ENCODE measurements at regions of chr11 and their contacts with region 1.

Region 1: GRCh38 chr11:33257897-33258630 is 883 bp downstream of the HIPK3 start:
- DNase-seq: peak; percentile 91 to 92
- ATAC-seq: peak; percentile 85 to 96 (median 88)
- H3K4me3 ChIP-seq: peak overlapping the region; percentile 57 to 97 (median 93)
- H3K27ac ChIP-seq: peak overlapping the region; percentile 95 to 100 (median 100)
- H3K4me1 ChIP-seq: peaks cover 0 to 50% (median 42%) of the 10 kb centered on the region in 9 donors
- H3K27me3 ChIP-seq: no peaks in the 10 kb centered on the region
- CTCF ChIP-seq: peak in 7 of 9 donors; percentile 16 to 56 (median 44)

Region 2: DNA sequence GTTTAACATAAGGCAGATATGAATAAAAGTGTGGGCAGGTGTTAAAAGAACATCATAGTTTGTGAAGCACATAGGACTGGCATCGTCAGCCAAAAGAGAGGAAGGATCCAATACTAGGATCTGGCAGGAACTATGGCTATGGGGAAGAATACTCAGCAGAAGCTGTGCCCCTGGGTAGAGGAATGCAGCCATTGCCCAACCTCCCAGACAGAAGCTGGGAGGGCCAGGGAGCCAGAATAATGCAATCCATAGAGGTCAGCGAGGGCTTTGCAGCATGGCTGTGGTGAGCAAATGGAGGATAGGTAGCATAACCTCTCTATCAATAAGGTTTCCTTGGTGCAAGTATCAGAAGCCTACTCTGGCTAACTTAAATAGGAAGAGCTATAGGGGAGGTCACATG is 85.1 kb before region 1 on chr11:
- intact Hi-C with region 1: loop called in 7 of 10 experiments (anchors 2 to 10 kb)
- DNase-seq: no peak
- ATAC-seq: peak in 3 of 8 donors; percentile 40 to 89 (median 47)
- H3K4me3 ChIP-seq: no peak overlapping the region
- H3K27ac ChIP-seq: no peak overlapping the region
- H3K4me1 ChIP-seq: peaks cover 0 to 9% (median 3%) of the 10 kb centered on the region in 9 donors
- H3K27me3 ChIP-seq: no peaks in the 10 kb centered on the region
- CTCF ChIP-seq: no peak

Region 3: GRCh38 chr11:33307984-33308383 is 49.9 kb after region 1 on chr11:
- intact Hi-C with region 1: loop called in 1 of 10 experiments (anchors 5 kb)
- DNase-seq: no peak
- ATAC-seq: no peak
- H3K4me3 ChIP-seq: no peak overlapping the region
- H3K27ac ChIP-seq: no peak overlapping the region
- H3K4me1 ChIP-seq: peaks cover 2 to 90% (median 55%) of the 10 kb centered on the region in 9 donors
- H3K27me3 ChIP-seq: no peaks in the 10 kb centered on the region
- CTCF ChIP-seq: no peak

Region 4: DNA sequence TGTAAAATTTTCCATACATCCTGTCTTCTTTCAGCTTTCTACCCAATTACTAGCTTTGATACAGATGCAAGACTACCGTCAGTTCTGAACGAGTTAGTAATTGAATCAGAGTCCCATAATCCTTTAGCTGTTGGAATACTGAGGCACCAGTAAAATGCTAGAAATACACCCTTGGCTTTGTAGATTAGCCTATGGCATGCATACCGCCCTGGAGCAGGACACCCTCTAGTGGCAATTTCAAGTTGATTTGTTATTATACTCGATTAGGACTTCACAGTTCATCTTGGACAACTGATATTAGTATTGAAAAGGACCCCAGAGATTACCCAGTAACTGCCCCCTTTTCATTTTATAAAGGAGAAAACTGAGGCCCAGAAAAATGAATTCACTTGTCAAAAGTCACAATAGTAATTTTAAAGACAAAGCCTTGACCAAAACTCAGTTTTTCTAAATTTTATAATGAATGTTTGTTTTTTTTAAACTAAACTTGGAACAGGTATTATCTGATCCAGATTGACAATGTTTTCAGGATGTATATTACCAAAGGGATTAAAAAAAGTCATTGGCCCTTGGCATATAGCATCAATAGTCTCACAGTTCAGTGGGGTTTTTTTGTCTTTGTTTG is 71.8 kb after region 1 on chr11:
- intact Hi-C with region 1: loop called in 9 of 10 experiments (anchors 1 to 10 kb)
- DNase-seq: peak in 1 of 2 donors; percentile 45
- ATAC-seq: peak; percentile 57 to 80 (median 74)
- H3K4me3 ChIP-seq: no peak overlapping the region
- H3K27ac ChIP-seq: peak overlapping the region in 3 of 10 donors; percentile 14 to 50 (median 16)
- H3K4me1 ChIP-seq: peaks cover 4 to 99% (median 74%) of the 10 kb centered on the region in 9 donors
- H3K27me3 ChIP-seq: no peaks in the 10 kb centered on the region
- CTCF ChIP-seq: peak; percentile 29 to 79 (median 66)

Region 5: GRCh38 chr11:33700425-33701271 is 442.6 kb after region 1 on chr11 and contains the start of gene C11orf91:
- intact Hi-C with region 1: loop called in 4 of 10 experiments (anchors 5 to 10 kb)
- DNase-seq: peak; percentile 97 to 98
- ATAC-seq: peak; percentile 83 to 92 (median 90)
- H3K4me3 ChIP-seq: peak within 1 kb of the TSS in 9 of 10 donors; percentile 34 to 68 (median 56)
- H3K27ac ChIP-seq: peak within 1 kb of the TSS; percentile 80 to 92 (median 86)
- H3K4me1 ChIP-seq: peaks cover 14 to 84% (median 71%) of the 10 kb centered on the region in 9 donors
- H3K27me3 ChIP-seq: no peaks in the 10 kb centered on the region
- CTCF ChIP-seq: no peak
- total RNA-seq, gene C11orf91: 3.0 TPM in 1 of 10 donors, not detected in the others

Region 6: GRCh38 chr11:33761471-33761870 is 503.4 kb after region 1 on chr11:
- intact Hi-C with region 1: no loop called
- DNase-seq: no peak
- ATAC-seq: no peak
- H3K4me3 ChIP-seq: no peak overlapping the region
- H3K27ac ChIP-seq: no peak overlapping the region
- H3K4me1 ChIP-seq: no peaks in the 10 kb centered on the region
- H3K27me3 ChIP-seq: no peaks in the 10 kb centered on the region
- CTCF ChIP-seq: no peak

Measured in heart right ventricle (tissue), 16 donors.